SK-N-SH (cell line): ENCODE measurements at regions of chr17 and their contacts with region 1.

Region 1: DNA sequence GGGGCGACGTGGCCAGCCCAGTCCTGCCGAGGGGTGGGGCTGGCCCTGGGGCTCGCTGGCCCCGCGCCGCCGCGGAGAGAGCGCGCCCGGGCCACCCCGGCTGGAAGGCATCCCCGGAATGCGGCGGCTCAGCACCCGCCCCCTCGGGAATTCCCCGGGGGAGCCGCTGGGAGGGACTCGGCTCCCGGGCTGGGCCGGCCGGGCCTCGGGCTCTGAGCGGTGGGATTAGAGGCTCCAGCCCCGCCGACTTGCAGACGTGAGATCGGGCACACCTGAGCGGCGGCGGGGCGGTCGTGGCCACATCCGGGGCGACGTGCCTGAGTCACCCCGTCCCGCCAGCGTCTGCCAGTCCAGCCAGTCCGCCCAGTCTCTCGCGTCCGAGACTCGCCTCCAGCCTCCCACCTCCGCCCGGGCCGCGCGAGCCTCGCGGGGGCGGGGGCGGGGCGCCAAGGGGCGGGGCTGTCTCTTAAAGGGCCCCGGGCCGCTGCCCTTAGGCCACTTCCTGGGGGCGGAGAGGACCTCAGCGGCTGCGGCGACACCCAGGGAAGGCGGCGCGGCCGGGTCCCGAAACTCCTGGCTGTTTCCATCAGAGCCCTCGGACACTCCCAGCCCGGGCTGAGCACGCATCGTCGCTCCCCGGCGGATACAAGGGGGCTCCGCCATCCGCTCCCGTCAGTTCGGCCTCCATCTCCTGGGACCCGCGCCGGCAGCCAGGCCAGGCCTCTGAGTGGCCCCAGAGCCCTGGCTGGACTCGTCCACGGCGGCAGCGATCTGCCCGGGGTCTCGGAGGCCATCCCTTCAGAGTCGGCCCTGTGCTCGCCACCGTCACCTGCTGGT is at the start of gene KCTD11:
- DNase-seq: peak; percentile 89
- H3K4me3 ChIP-seq: peak within 1 kb of the TSS; percentile 69 to 97
- H3K27ac ChIP-seq: peak within 1 kb of the TSS; percentile 88 to 99
- H3K4me1 ChIP-seq: peaks cover 19 to 48% of the 10 kb centered on the region in 2 experiments; a peak in 2 of 4 replicates
- H3K27me3 ChIP-seq: no peaks in the 10 kb centered on the region
- CTCF ChIP-seq: no peak
- EP300 ChIP-seq: peak in 1 of 2 experiments; percentile 14; a peak in 1 of 4 replicates
- RAD21 ChIP-seq: no peak
- polyA plus RNA-seq, gene KCTD11: 9.5 and 12.1 TPM in 2 replicates

Region 2: DNA sequence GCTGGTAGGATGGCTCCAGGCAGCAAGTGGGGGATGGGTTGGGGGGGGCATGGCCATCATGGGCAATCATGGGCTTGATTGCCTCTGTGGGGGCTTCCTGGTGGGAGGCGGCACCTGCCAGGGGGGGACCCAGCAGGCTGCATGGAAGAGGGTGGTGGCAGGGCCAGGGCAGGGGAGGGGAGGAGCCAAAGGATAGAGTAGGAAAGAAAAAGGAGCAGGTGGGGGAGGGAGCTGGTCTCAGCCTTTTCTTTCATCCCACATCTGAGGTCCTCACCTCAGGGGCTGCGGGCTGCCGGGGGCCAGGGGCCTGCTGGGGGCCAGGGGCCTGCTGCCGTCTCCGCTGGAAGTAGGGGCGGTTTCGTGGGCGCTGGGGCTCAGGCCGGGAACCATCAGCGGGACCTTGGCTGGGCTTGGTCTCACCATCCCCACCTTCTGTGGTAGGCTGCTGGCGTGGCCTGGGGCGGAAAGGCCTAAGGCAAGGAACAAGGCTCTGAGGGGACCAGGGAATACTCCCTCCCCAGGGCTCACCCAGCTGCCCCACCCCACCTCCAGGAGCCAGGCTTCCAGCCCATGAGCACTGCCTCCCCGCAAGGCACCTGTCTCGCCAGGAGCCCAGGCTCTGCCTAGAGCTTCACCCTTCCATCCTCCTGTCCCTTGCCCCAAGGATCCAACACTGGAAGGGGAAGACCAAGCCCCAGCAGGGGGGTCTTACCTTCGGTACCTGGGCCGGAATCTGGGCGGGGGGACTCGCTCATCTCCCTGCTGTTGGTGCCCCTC is 62.4 kb before region 1 on chr17:
- CTCF ChIA-PET with region 1: no interaction called
- POLR2A ChIA-PET with region 1: no interaction called
- DNase-seq: peak; percentile 29
- H3K4me3 ChIP-seq: no peak overlapping the region
- H3K27ac ChIP-seq: no peak overlapping the region
- H3K4me1 ChIP-seq: peaks cover 0 to 3% of the 10 kb centered on the region in 2 experiments; a peak in 1 of 4 replicates
- H3K27me3 ChIP-seq: peaks cover 30% of the 10 kb centered on the region; the same call in 1 of the 2 replicates
- CTCF ChIP-seq: no peak
- EP300 ChIP-seq: no peak
- RAD21 ChIP-seq: no peak

Region 3: DNA sequence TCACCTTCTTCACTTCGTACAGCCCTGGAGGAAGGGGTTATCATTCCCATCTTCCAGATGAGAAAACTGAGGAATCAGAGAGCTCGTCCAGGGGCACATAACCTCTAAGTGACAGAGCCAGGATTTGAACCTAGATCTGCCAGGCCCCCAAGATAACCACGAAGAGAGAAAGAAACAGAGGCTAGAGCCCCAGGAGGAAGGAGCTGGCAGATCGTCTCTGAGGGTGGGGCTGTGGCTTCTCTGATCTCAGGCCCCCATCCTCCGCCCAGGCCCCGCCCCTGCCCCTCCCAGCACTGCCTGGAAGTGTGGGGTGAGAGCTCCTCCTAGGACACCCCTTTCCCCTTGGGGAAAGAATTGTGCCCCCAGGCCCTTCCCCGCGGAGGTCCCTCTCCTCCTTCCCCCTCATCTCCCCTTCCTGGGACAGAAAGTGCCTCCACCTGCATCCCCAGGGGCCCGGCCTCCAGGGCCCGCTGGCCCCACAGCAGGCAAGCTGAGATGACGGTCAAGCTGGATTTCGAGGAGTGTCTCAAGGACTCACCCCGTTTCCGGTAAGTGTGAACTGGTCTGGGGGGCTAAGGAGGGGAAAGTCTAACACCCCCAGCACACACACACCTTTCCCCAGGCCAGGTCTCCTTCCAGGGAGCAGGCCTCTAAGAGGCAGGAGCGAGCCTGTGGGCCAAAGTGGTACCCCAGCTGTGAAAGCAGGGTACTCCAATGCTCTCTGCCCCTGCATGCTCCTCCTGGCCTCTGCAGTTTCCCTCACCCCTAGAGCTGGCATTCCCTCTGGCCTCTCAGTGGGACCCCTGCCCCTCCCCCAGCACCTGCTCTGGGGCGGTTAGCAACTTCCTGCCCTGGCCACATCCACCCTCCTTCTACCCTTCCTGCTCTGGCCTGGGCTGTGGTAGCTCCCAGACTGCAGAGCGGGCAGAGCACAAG is 15.4 kb before region 1 on chr17 and contains the start of gene ACAP1:
- CTCF ChIA-PET with region 1: interaction called, 45 read pairs
- POLR2A ChIA-PET with region 1: no interaction called
- DNase-seq: no peak
- H3K4me3 ChIP-seq: no peak within 1 kb of the TSS
- H3K27ac ChIP-seq: no peak within 1 kb of the TSS
- H3K4me1 ChIP-seq: no peaks in the 10 kb centered on the region
- H3K27me3 ChIP-seq: peaks cover 18% of the 10 kb centered on the region
- CTCF ChIP-seq: no peak
- EP300 ChIP-seq: no peak
- RAD21 ChIP-seq: no peak
- polyA plus RNA-seq, gene ACAP1: 0.71 and 6.4 TPM in 2 replicates

Region 4: DNA sequence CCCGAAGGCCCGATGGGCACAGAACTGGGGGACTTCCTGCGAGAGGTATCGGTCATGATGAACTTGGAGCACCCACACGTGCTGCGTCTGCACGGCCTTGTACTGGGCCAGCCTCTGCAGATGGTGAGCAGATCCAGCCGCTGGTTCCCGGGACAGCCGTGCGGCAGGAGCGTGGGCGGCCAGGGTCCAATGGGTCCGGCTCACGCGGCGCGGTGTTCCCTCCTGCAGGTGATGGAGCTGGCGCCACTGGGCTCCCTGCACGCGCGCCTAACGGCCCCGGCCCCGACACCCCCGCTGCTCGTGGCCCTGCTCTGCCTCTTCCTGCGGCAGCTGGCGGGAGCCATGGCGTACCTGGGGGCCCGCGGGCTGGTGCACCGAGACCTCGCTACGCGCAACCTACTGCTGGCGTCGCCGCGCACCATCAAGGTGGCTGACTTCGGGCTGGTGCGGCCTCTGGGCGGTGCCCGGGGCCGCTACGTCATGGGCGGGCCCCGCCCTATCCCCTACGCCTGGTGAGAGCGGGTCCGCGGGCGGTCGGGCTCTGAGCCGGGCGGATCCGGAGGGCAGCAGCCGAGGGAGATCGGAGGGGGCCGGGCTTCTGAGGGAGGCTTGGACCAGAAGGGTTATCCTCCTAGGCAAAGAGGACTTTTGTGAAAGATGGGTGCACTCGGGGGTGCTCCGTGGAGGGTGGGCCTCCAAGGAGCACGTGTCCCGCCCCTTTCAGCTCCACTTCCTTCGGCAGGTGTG is 32.0 kb after region 1 on chr17:
- CTCF ChIA-PET with region 1: interaction called, 11 read pairs
- POLR2A ChIA-PET with region 1: no interaction called
- DNase-seq: peak; percentile 95
- H3K4me3 ChIP-seq: peak overlapping the region in 1 of 2 experiments; percentile 42; a peak in 2 of 4 replicates
- H3K27ac ChIP-seq: peak overlapping the region in 1 of 2 experiments; percentile 25; a peak in 1 of 4 replicates
- H3K4me1 ChIP-seq: peaks cover 0 to 32% of the 10 kb centered on the region in 2 experiments; a peak in 2 of 4 replicates
- H3K27me3 ChIP-seq: peaks cover 8% of the 10 kb centered on the region; the same call in 1 of the 2 replicates
- CTCF ChIP-seq: no peak
- EP300 ChIP-seq: no peak
- RAD21 ChIP-seq: no peak

Region 5: GRCh38 chr17:7435221-7435675 is 83.4 kb after region 1 on chr17 and contains the start of gene TMEM102:
- CTCF ChIA-PET with region 1: interaction called, 27 read pairs
- POLR2A ChIA-PET with region 1: interaction called, 3 read pairs
- DNase-seq: peak; percentile 95
- H3K4me3 ChIP-seq: peak within 1 kb of the TSS; percentile 67 to 86
- H3K27ac ChIP-seq: peak within 1 kb of the TSS in 1 of 2 experiments; percentile 55; a peak in 1 of 4 replicates
- H3K4me1 ChIP-seq: peaks cover 0 to 16% of the 10 kb centered on the region in 2 experiments; a peak in 1 of 4 replicates
- H3K27me3 ChIP-seq: no peaks in the 10 kb centered on the region
- CTCF ChIP-seq: no peak
- EP300 ChIP-seq: no peak
- RAD21 ChIP-seq: no peak
- polyA plus RNA-seq, gene TMEM102: 6.5 and 6.6 TPM in 2 replicates

Region 6: GRCh38 chr17:7508190-7508589 is 156.3 kb after region 1 on chr17:
- CTCF ChIA-PET with region 1: interaction called, 29 read pairs
- POLR2A ChIA-PET with region 1: no interaction called
- DNase-seq: no peak
- H3K4me3 ChIP-seq: no peak overlapping the region
- H3K27ac ChIP-seq: no peak overlapping the region
- H3K4me1 ChIP-seq: no peaks in the 10 kb centered on the region
- H3K27me3 ChIP-seq: no peaks in the 10 kb centered on the region
- CTCF ChIP-seq: no peak
- EP300 ChIP-seq: no peak
- RAD21 ChIP-seq: no peak

Region 7: DNA sequence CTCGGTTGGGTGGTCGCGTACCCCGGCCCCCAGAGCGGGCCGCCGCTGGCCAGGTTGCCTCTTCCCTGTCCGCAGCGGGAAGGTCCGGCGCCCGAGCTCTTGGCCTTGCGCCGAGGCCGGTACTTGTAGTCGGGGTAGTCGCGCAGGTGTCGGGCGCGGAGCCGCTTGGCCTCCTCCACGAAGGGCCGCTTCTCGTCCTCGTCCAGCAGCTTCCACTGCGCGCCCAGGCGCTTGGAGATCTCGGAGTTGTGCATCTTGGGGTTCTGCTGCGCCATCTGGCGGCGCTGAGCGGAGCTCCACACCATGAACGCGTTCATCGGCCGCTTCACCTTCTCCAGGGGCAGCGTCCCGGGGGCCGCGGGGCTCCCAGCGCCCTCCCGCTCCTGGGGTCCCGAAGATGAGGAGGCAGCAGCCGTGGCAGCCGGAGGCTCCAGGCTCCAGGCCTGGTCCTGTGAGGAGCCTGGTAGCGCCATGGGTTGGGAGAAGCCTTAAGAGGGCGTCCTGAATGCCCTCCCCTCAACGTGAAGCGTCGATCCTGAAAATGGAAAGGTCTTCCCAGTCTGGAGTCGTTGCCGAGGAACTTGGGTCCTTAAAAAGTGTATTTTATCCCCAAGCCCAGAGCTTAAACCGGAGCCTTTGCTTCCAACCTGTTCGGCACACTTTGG is 237.5 kb after region 1 on chr17:
- CTCF ChIA-PET with region 1: interaction called, 17 read pairs
- POLR2A ChIA-PET with region 1: no interaction called
- DNase-seq: peak; percentile 91
- H3K4me3 ChIP-seq: peak overlapping the region in 1 of 2 experiments; percentile 3; a peak in 1 of 4 replicates
- H3K27ac ChIP-seq: peak overlapping the region in 1 of 2 experiments; percentile 21; a peak in 2 of 4 replicates
- H3K4me1 ChIP-seq: peaks cover 17 to 32% of the 10 kb centered on the region in 2 experiments
- H3K27me3 ChIP-seq: no peaks in the 10 kb centered on the region
- CTCF ChIP-seq: peak; percentile 83
- EP300 ChIP-seq: no peak
- RAD21 ChIP-seq: peak; percentile 61